Heart right ventricle (tissue), 16 donors: ENCODE measurements at regions of chr6 and their contacts with region 1.

Region 1: DNA sequence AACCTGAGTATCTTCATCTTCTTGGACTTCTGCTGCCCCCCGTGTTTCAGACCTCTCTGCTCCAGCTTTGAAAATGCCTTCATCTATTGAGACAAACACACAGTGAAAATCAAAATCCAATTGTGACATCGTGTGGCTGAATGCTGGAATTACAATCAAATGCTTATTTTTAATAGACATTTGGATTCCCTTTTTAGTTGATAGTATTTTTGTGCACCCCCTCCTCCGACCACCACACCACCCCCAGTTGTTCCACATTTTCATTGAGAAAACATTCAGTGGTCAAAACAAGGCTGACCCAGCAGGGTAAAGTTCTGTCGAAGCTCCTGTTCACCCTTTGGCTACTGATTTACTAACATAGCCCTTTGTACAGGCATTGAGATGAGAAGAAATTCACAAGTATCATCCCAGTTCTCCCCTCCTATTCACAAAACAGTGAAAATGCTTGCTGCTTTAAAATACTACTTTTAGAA is 79.0 kb downstream of the NRSN1 start:
- DNase-seq: no peak
- ATAC-seq: no peak
- H3K4me3 ChIP-seq: no peak overlapping the region
- H3K27ac ChIP-seq: no peak overlapping the region
- H3K4me1 ChIP-seq: no peaks in the 10 kb centered on the region
- H3K27me3 ChIP-seq: no peaks in the 10 kb centered on the region
- CTCF ChIP-seq: peak; percentile 23 to 69 (median 63)

Region 2: GRCh38 chr6:24064082-24064481 is 141.0 kb before region 1 on chr6:
- intact Hi-C with region 1: loop called in 2 of 10 experiments (anchors 10 kb)
- DNase-seq: no peak
- ATAC-seq: no peak
- H3K4me3 ChIP-seq: no peak overlapping the region
- H3K27ac ChIP-seq: no peak overlapping the region
- H3K4me1 ChIP-seq: no peaks in the 10 kb centered on the region
- H3K27me3 ChIP-seq: no peaks in the 10 kb centered on the region
- CTCF ChIP-seq: peak in 6 of 9 donors; percentile 25 to 48 (median 38)